ENCODE measurements at regions of chr20 and their contacts with region 1.

Region 1: GRCh38 chr20:17569616-17570346 is at the start of gene DSTN:
- DNase-seq: peak; percentile 86
- H3K4me3 ChIP-seq: peak within 1 kb of the TSS; percentile 82
- CTCF ChIP-seq: no peak

Region 2: GRCh38 chr20:17471606-17472187 is 98.1 kb before region 1 on chr20:
- CTCF ChIA-PET with region 1: no interaction called
- POLR2A ChIA-PET with region 1: no interaction called
- DNase-seq: no peak
- H3K4me3 ChIP-seq: no peak overlapping the region
- CTCF ChIP-seq: no peak

Region 3: GRCh38 chr20:17558154-17558940 is 11.4 kb before region 1 on chr20:
- CTCF ChIA-PET with region 1: interaction called, 8 read pairs
- POLR2A ChIA-PET with region 1: interaction called, 26 read pairs
- DNase-seq: no peak
- H3K4me3 ChIP-seq: peak overlapping the region; percentile 39
- CTCF ChIP-seq: no peak

Region 4: GRCh38 chr20:17594443-17594842 is 24.7 kb after region 1 on chr20:
- CTCF ChIA-PET with region 1: interaction called, 5 read pairs
- POLR2A ChIA-PET with region 1: interaction called, 10 read pairs
- DNase-seq: peak; percentile 51
- H3K4me3 ChIP-seq: no peak overlapping the region
- CTCF ChIP-seq: no peak